ENCODE measurements at regions of chr9 and their contacts with region 1.

Region 1: DNA sequence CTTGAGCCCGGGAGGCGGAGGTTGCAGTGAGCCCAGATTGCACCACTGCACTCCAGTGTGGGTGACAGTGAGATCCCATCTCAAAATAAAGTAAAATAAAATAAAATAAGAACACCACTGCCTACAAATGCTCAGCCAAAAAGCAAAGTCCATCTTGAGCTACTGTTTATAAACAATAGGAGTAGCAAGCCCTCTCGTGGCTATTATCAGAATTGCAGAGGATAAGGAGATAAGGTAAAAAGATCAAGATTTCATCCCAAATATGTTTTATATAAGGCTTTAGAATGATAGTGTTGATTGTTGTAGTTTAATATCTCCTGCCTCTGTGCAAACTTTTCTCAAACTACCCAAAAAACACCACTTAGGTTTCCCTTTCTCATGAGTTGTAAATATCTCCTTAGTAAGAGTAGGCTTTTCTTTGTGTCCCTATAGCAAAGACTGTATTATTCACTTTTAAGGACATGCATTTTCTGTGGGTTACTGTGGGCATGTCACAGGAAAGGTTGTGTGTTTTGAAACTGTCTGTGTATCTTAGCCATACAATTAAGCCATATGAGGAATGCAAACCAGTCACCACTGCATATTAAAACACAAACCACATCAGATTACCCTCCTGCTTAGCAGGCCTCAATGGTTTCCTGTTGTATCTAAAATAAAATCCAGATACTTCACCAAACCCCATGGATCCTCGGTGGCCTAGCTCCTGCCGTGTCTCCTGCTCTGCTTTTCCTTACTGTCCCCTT is 31.8 kb upstream of the CKS2 start:
- DNase-seq: peak; percentile 34
- ATAC-seq: peak; percentile 53
- H3K4me3 Mint-ChIP-seq: no peak overlapping the region
- H3K27ac Mint-ChIP-seq: no peak overlapping the region
- H3K4me1 Mint-ChIP-seq: peaks cover 29% of the 10 kb centered on the region
- H3K27me3 Mint-ChIP-seq: no peaks in the 10 kb centered on the region
- CTCF ChIP-seq: peak; percentile 89

Region 2: DNA sequence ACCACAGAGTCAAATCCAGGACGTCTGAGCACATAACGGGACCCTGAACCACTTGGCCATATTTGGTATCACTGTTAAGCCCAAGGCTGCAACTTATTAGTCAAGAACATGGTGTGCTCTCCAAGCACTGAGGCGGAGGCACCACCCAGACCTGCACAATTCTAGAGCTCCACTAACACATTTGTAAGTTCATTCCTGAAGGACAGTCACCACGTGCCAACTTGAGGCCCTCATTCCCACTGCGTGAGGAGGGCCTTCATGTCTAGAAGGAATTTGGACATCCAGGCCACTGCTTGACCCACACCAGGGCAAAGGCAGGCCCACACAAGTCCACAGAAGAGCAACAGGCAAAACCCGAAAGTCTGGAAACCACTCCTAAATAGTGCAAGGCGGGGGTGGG is 109.9 kb before region 1 on chr9:
- CTCF ChIA-PET with region 1: no interaction called
- POLR2A ChIA-PET with region 1: no interaction called
- intact Hi-C with region 1: no loop called
- DNase-seq: no peak
- ATAC-seq: no peak
- H3K4me3 Mint-ChIP-seq: no peak overlapping the region
- H3K27ac Mint-ChIP-seq: no peak overlapping the region
- H3K4me1 Mint-ChIP-seq: no peaks in the 10 kb centered on the region
- H3K27me3 Mint-ChIP-seq: peaks cover 16% of the 10 kb centered on the region
- CTCF ChIP-seq: no peak

Region 3: GRCh38 chr9:89179895-89180667 is 99.1 kb before region 1 on chr9:
- CTCF ChIA-PET with region 1: interaction called, 8 read pairs
- POLR2A ChIA-PET with region 1: no interaction called
- intact Hi-C with region 1: loop called (anchors 5 kb)
- DNase-seq: peak; percentile 80
- ATAC-seq: peak; percentile 90
- H3K4me3 Mint-ChIP-seq: peak overlapping the region; percentile 56
- H3K27ac Mint-ChIP-seq: peak overlapping the region; percentile 27
- H3K4me1 Mint-ChIP-seq: peaks cover 23% of the 10 kb centered on the region
- H3K27me3 Mint-ChIP-seq: peaks cover 58% of the 10 kb centered on the region
- CTCF ChIP-seq: no peak

Region 4: GRCh38 chr9:89265214-89265613 is 14.0 kb before region 1 on chr9:
- CTCF ChIA-PET with region 1: interaction called, 12 read pairs
- POLR2A ChIA-PET with region 1: no interaction called
- intact Hi-C with region 1: no loop called
- DNase-seq: no peak
- ATAC-seq: no peak
- H3K4me3 Mint-ChIP-seq: no peak overlapping the region
- H3K27ac Mint-ChIP-seq: no peak overlapping the region
- H3K4me1 Mint-ChIP-seq: no peaks in the 10 kb centered on the region
- H3K27me3 Mint-ChIP-seq: peaks cover 6% of the 10 kb centered on the region
- CTCF ChIP-seq: no peak